BJ (cell line): ENCODE measurements at regions of chr1 and their contacts with region 1.

Region 1: GRCh38 chr1:160046494-160047110 is 14.8 kb upstream of the PIGM start:
- DNase-seq: no peak
- H3K4me3 ChIP-seq: no peak overlapping the region
- H3K27me3 ChIP-seq: peaks cover 11% of the 10 kb centered on the region
- CTCF ChIP-seq: peak; percentile 60

Region 2: GRCh38 chr1:158901623-158902022 is 1145.0 kb before region 1 on chr1:
- CTCF ChIA-PET with region 1: no interaction called
- POLR2A ChIA-PET with region 1: no interaction called
- DNase-seq: no peak
- H3K4me3 ChIP-seq: no peak overlapping the region
- H3K27me3 ChIP-seq: no peaks in the 10 kb centered on the region
- CTCF ChIP-seq: no peak

Region 3: DNA sequence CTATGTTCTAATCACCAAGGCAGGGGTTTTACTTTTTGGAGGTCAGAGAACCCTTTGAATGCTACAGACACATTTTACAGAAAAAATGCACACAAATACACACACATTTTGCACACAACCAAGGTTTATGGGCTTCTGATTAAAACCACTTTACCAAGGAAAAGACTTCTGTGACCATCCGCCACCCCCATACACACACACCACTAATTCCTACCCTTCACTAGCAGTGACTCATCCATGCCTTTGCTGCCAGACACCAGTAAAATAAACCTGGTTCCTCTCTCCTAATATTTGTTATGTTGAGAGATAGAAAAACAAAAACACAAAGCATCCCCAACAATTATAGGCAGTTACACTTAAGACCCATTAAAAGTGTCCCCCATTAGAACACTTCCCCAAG is 27.7 kb before region 1 on chr1:
- CTCF ChIA-PET with region 1: interaction called, 18 read pairs
- POLR2A ChIA-PET with region 1: no interaction called
- DNase-seq: no peak
- H3K4me3 ChIP-seq: no peak overlapping the region
- H3K27me3 ChIP-seq: no peaks in the 10 kb centered on the region; the same call in none of the 2 replicates
- CTCF ChIP-seq: no peak

Region 4: GRCh38 chr1:160031365-160032164 is 15.0 kb before region 1 on chr1 and contains the start of gene PIGM:
- CTCF ChIA-PET with region 1: interaction called, 37 read pairs
- POLR2A ChIA-PET with region 1: interaction called, 3 read pairs
- DNase-seq: peak; percentile 36
- H3K4me3 ChIP-seq: peak within 1 kb of the TSS; percentile 55
- H3K27me3 ChIP-seq: no peaks in the 10 kb centered on the region
- CTCF ChIP-seq: no peak
- polyA plus RNA-seq, gene PIGM: 3.5 and 4.8 TPM in 2 replicates

Region 5: DNA sequence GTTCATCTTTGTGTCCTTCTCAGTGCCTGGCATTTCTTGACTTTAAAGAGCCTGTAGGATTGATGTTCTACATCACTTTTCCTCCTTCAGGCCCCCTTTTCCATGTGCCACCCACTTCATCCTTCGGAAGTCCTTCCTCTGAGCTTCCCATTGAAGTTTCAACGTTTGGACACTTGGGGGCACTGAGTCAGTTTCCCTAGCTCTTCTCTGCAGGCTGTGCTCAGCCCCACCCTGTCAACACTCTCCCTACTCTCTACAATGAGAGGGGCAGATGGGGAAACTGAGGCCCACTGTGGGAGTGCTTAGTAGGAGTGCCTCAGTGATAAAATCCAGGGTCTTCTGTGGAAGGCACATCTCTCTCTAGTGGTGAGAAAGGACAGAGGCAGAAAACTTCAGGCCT is 11.5 kb after region 1 on chr1:
- CTCF ChIA-PET with region 1: interaction called, 39 read pairs
- POLR2A ChIA-PET with region 1: interaction called, 11 read pairs
- DNase-seq: no peak
- H3K4me3 ChIP-seq: no peak overlapping the region
- H3K27me3 ChIP-seq: peaks cover 27% of the 10 kb centered on the region
- CTCF ChIP-seq: peak; percentile 50

Region 6: GRCh38 chr1:160070243-160071163 is 23.9 kb after region 1 on chr1:
- CTCF ChIA-PET with region 1: interaction called, 74 read pairs
- POLR2A ChIA-PET with region 1: no interaction called
- DNase-seq: no peak
- H3K4me3 ChIP-seq: peak overlapping the region; percentile 42
- H3K27me3 ChIP-seq: peaks cover 33% of the 10 kb centered on the region
- CTCF ChIP-seq: 0 out of 2 replicates have a peak, but pooled peaks have one; percentile 4

Region 7: GRCh38 chr1:160078512-160079195 is 32.1 kb after region 1 on chr1:
- CTCF ChIA-PET with region 1: interaction called, 74 read pairs
- POLR2A ChIA-PET with region 1: no interaction called
- DNase-seq: no peak
- H3K4me3 ChIP-seq: no peak overlapping the region
- H3K27me3 ChIP-seq: peaks cover 37% of the 10 kb centered on the region
- CTCF ChIP-seq: peak; percentile 84